Tibial artery (tissue), 4 donors: ENCODE measurements at regions of chr2 and their contacts with region 1.

Region 1: DNA sequence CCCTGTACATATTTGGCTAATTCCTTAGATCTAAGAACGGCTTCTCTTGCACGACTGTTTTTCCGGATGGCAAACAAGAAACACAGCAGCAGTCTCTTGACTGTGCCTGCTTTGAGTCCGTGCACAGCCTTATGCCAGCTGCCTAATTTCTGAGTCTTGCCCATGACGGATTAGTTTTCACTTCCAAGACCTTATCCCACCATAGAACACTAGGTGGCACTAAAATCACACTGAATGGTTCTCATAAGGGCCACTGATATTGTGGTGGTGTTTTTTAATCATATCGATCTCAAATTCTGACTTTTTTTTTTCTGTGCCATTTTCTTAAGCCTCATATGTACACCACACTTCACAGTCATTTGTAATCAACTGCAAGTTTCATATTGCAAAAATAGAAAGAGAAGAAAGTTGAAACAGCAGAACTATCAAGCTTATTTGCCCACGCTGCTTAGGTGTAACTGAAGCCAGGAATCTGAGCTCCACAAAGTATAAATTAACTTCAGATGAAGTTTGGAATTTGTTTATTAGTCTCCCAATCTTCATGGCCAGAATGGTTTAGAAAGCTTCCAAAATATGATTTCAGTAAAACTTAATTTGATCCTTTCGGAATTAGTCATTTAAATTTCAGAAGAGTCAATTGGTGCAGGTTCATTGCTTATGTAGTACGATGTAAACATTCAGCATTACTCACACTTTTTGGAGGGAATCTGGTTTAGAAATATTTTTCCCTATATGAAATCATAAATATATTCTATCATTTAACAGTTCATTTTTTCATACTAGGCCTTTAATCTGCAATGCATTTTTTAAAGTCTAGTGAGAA is 45.5 kb upstream of the SCN7A start:
- DNase-seq: no peak
- H3K4me3 ChIP-seq: no peak overlapping the region
- H3K27ac ChIP-seq: no peak overlapping the region
- H3K4me1 ChIP-seq: no peaks in the 10 kb centered on the region
- H3K27me3 ChIP-seq: no peaks in the 10 kb centered on the region
- CTCF ChIP-seq: peak; percentile 58 to 76

Region 2: DNA sequence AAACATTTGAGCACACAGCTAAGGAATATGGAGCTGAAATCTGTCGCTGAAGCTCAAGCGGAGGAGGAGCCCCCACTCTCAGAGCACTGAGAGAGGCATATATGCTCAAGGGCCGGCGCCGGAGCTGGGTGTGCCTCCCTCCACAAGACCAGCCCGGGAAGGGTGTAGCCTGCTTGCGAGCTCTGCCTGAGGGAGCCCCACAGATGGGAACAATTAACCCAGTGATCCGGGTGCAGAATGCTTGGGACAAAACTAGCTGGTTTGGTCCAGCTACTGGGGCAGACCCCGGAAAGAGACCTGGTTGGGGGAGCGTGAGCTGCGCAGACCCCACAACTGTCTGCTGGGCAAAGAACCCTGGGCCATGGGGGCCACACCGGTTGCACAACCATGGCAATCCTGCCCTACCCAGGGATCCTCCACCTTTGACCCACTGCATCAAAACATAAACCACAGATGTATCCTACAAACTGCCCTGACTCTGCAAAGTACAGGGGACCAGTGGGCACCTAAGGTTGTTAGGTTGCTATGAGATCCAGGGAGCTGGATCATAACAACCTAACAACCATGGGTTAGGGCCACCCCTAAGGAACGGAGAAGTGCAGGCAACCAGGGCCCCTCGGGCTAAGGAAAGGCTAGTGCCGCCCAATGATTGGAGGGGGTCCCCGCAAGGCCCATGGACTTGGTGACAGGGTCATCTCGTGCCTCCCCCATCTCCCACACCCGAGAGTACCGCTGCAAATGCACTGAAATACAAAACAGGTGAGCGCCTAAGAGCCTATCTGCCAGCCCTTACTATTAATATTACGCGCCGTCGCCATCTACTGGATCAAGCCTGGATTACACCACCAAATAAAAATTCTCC is 358.4 kb before region 1 on chr2:
- intact Hi-C with region 1: no loop called
- DNase-seq: peak in 1 of 2 donors; percentile 25
- H3K4me3 ChIP-seq: no peak overlapping the region
- H3K27ac ChIP-seq: no peak overlapping the region
- H3K4me1 ChIP-seq: no peaks in the 10 kb centered on the region
- H3K27me3 ChIP-seq: peaks cover 0 to 6% of the 10 kb centered on the region in 2 donors
- CTCF ChIP-seq: no peak

Region 3: DNA sequence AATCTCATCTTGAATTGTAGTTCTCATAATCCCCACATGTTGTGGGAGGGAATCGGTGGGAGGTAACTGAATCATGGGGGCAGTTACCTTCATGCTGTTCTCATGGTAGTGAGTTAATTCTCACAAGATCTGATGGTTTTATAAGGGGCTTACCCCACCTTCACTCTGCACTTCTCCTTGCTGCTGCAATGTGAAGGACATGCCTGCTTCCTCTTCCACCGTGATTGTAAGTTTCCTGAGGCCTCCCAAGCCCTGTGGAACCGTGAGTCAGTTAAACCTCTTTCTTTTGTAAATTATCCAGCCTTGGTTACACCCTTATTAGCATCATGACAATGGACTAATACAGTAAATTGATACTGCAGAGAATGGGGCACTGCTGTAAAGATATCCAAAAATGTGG is 103.4 kb before region 1 on chr2:
- intact Hi-C with region 1: no loop called
- DNase-seq: no peak
- H3K4me3 ChIP-seq: no peak overlapping the region
- H3K27ac ChIP-seq: no peak overlapping the region
- H3K4me1 ChIP-seq: no peaks in the 10 kb centered on the region
- H3K27me3 ChIP-seq: no peaks in the 10 kb centered on the region
- CTCF ChIP-seq: no peak

Region 4: DNA sequence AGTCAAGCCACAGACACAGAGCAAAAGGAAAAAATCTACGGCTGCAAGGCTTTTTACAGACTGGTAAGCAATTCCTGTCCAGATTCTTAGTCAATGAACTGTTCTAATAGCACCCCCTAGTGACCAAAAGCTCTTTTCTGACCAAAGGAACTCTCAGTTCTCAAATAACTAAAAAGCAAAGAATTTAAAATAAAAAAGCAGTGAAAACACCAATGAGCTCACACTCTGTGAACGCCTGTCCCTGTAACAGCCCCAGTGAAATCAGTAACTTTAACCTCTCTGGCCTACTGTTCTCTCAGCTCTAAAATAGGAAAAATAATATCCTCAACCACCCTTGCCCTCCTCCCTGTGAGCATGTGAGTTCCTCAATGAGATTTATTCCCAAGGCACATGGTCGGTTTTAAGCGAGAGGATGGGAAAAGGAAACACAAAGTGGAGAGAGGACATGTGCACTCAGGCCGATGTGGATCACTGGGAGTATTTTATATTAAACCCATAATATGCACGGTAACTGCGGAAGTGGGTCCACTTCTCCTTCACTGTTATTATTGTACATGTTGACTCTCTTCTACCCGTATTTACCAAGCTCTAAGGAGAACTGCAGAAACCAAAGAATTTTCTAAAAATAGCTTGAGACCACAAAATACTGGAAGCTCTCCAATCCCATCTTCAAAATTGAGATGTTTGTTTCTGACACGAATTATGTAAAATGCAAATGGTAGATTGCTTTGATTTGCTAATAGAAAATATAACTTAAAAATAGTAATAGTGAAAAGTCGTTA is 1579.4 kb after region 1 on chr2:
- intact Hi-C with region 1: loop called (anchors 10 kb)
- DNase-seq: no peak
- H3K4me3 ChIP-seq: no peak overlapping the region
- H3K27ac ChIP-seq: peak overlapping the region; percentile 16 to 30
- H3K4me1 ChIP-seq: peaks cover 0 to 31% (median 6%) of the 10 kb centered on the region in 4 donors
- H3K27me3 ChIP-seq: no peaks in the 10 kb centered on the region
- CTCF ChIP-seq: peak; percentile 50 to 64